Sigmoid colon (tissue), 7 donors: ENCODE measurements at regions of chr7 and their contacts with region 1.

Region 1: DNA sequence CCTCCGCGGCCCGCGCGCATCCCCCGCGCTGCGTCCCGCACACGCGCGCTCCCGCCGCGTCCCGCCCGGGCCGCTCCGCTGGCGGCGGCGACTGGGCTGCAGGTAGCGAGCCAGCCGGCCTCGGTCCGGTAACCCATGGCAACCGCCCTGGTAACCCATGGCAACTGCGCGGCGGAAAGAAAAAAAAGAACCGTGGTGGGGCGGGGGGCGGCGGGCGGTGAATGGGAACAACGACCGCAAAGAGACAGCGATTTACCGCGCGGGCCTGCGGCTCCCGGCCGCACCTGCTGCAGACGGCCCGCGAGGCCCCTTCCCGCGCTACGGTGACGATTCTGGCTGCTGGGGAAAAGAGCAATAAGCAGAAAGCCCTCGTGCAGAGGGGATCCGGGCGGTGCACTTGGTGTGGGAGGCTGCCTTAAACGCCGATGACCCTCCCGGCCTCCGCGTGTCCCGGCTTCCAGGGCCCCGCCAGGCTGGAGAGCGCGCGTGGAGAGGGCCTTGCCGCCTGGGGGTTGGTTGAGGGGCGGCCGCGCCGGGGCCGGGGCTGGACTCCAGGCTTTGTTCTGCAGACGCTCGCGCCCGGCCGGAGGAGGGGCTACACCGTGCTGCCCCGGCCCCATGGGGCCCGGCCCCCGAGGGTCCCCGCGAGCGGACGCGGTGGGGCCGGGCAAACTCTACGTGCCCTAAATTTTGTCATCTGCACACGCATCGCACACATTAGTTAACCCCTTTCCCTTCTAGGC is 84.7 kb downstream of the SNX10 start:
- DNase-seq: no peak
- H3K4me3 ChIP-seq: peak overlapping the region in 3 of 4 donors; percentile 31 to 39 (median 35)
- H3K27ac ChIP-seq: peak overlapping the region in 2 of 4 donors; percentile 12 to 33
- H3K4me1 ChIP-seq: peaks cover 0 to 15% (median 12%) of the 10 kb centered on the region in 4 donors
- H3K27me3 ChIP-seq: peaks cover 23 to 94% (median 78%) of the 10 kb centered on the region in 3 donors
- CTCF ChIP-seq: no peak
- EP300 ChIP-seq: no peak
- POLR2A ChIP-seq: no peak

Region 2: DNA sequence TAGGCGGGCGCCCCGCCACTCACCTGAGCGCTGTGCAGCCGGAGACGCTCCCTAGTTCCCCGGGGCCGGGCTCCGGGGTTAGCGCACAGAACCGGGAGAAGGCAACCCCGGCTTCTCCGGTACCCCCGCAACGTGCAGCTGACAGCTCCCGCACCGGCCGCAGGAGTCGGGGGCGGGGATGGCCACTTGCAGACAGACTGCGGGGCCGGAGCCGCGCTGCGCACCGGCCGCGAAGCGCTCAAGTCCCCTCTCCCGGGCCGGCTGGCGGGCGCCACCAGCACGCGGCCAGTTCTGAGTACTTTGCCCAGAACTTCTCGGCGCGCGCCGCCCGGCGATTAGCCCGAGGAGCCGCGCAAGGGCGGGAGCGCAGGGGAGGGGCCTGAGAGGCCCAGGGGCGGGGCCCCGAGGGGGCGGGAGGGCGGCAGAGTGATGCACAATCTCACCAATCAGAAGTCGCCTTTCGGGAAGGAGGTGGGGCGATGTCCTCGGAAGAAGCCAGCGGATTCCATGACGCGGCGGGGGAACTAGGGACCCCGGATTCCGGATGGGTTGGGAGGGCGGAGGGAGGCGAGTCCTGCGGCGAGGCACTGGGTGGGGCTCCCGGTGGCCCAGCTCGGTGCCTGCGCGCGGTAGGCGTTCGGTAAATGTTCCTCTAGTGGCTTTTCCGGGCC is 1396.3 kb before region 1 on chr7 and contains the start of gene OSBPL3:
- intact Hi-C with region 1: no loop called
- DNase-seq: peak; percentile 97
- H3K4me3 ChIP-seq: peak within 1 kb of the TSS; percentile 49 to 76 (median 66)
- H3K27ac ChIP-seq: peak within 1 kb of the TSS; percentile 78 to 87 (median 80)
- H3K4me1 ChIP-seq: peaks cover 0 to 29% (median 21%) of the 10 kb centered on the region in 4 donors
- H3K27me3 ChIP-seq: peaks cover 0 to 8% (median 0%) of the 10 kb centered on the region in 3 donors
- CTCF ChIP-seq: no peak
- EP300 ChIP-seq: no peak
- POLR2A ChIP-seq: no peak
- total RNA-seq, gene OSBPL3: 1.8 to 2.2 (median 1.9) TPM

Region 3: GRCh38 chr7:25862260-25863037 is 513.9 kb before region 1 on chr7:
- intact Hi-C with region 1: loop called (anchors 10 kb)
- DNase-seq: peak; percentile 95
- H3K4me3 ChIP-seq: peak overlapping the region in 1 of 4 donors; percentile 10
- H3K27ac ChIP-seq: peak overlapping the region in 1 of 4 donors; percentile 51
- H3K4me1 ChIP-seq: peaks cover 0 to 15% (median 3%) of the 10 kb centered on the region in 4 donors
- H3K27me3 ChIP-seq: peaks cover 24 to 100% (median 99%) of the 10 kb centered on the region in 3 donors
- CTCF ChIP-seq: no peak
- EP300 ChIP-seq: no peak
- POLR2A ChIP-seq: no peak

Region 4: GRCh38 chr7:26329520-26330255 is 46.7 kb before region 1 on chr7:
- intact Hi-C with region 1: no loop called
- DNase-seq: peak; percentile 70
- H3K4me3 ChIP-seq: no peak overlapping the region
- H3K27ac ChIP-seq: no peak overlapping the region
- H3K4me1 ChIP-seq: no peaks in the 10 kb centered on the region
- H3K27me3 ChIP-seq: no peaks in the 10 kb centered on the region
- CTCF ChIP-seq: no peak
- EP300 ChIP-seq: no peak
- POLR2A ChIP-seq: no peak

Region 5: DNA sequence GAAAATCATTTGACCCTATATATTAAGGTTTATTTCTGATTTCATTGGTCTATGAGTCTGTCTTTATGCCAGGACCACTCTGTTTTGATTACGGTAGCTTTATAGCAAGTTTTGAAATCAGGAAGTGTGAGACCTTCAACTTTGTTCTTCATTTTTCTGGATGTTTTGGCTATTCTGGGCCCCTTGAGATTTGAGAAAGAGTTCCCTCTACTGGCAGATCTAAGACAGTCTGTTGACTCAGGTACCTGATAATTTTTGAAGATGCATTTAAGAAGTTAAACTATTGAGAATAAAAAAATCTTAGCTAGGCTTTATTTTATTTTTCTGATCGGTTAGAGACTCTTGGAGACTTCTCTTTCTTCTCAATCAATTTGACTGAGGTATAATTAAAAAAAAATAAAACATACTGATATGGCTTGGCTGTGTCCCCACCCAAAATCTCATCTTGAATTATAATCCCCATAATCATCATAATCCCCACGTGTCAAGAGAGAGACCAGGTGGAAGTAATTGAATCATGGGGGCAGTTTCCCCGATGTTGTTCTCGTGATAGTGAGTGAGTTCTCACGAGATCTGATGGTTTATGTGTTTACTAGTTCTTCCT is 124.5 kb after region 1 on chr7:
- intact Hi-C with region 1: loop called (anchors 5 kb)
- DNase-seq: no peak
- H3K4me3 ChIP-seq: no peak overlapping the region
- H3K27ac ChIP-seq: no peak overlapping the region
- H3K4me1 ChIP-seq: no peaks in the 10 kb centered on the region
- H3K27me3 ChIP-seq: peaks cover 0 to 3% (median 0%) of the 10 kb centered on the region in 3 donors
- CTCF ChIP-seq: peak in 3 of 4 experiments; percentile 21 to 32 (median 25)
- EP300 ChIP-seq: no peak
- POLR2A ChIP-seq: no peak